ENCODE measurements at regions of chr2 and their contacts with region 1.

Region 1: GRCh38 chr2:151437630-151438029 is 27.9 kb downstream of the RIF1 start:
- DNase-seq: no peak
- ATAC-seq: no peak
- H3K4me3 ChIP-seq: no peak overlapping the region
- H3K27ac ChIP-seq: no peak overlapping the region
- H3K4me1 ChIP-seq: no peaks in the 10 kb centered on the region
- H3K27me3 ChIP-seq: no peaks in the 10 kb centered on the region

Region 2: DNA sequence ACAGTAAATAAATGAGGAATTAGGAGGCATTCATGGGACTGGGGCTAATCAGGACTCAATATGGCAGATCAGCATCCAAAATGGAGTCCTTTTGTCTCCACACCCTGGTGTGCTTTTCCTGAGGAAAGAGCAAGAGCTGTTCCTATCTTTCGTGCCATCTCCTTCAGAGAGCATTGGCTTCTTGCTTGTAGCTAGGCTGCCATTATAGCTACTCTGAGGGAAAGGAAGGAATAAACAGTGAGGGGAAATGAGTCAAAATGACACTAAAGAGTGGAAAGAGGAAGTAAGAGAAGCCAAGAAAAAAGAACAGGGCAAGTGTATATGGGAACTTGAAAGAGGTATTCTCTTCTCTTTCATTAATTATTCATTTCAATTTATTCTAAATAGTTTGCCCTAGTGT is 139.7 kb before region 1 on chr2:
- intact Hi-C with region 1: no loop called
- DNase-seq: no peak
- ATAC-seq: no peak
- H3K4me3 ChIP-seq: no peak overlapping the region
- H3K27ac ChIP-seq: no peak overlapping the region
- H3K4me1 ChIP-seq: no peaks in the 10 kb centered on the region
- H3K27me3 ChIP-seq: no peaks in the 10 kb centered on the region

Region 3: GRCh38 chr2:152664703-152665102 is 1227.1 kb after region 1 on chr2:
- intact Hi-C with region 1: loop called in 1 of 4 experiments (anchors 10 kb)
- DNase-seq: no peak
- ATAC-seq: no peak
- H3K4me3 ChIP-seq: no peak overlapping the region
- H3K27ac ChIP-seq: no peak overlapping the region
- H3K4me1 ChIP-seq: no peaks in the 10 kb centered on the region
- H3K27me3 ChIP-seq: no peaks in the 10 kb centered on the region